CD4-positive, alpha-beta T cell (primary cell): ENCODE measurements at regions of chr2 and their contacts with region 1.

Region 1: GRCh38 chr2:105576440-105577252 is 168.1 kb upstream of the NCK2 start:
- DNase-seq: peak in 4 of 14 experiments; percentile 13 to 64 (median 62)
- ATAC-seq: peak; percentile 86
- H3K4me3 ChIP-seq: no peak overlapping the region
- H3K4me3 Mint-ChIP-seq: no peak overlapping the region
- H3K27ac ChIP-seq: no peak overlapping the region
- H3K27ac Mint-ChIP-seq: peak overlapping the region; percentile 83
- H3K4me1 ChIP-seq: peaks cover 17% of the 10 kb centered on the region
- H3K4me1 Mint-ChIP-seq: peaks cover 28% of the 10 kb centered on the region
- H3K27me3 ChIP-seq: no peaks in the 10 kb centered on the region
- H3K27me3 Mint-ChIP-seq: peaks cover 4% of the 10 kb centered on the region
- CTCF ChIP-seq: peak; percentile 78

Region 2: GRCh38 chr2:105344704-105345345 is 231.8 kb before region 1 on chr2:
- CTCF ChIA-PET with region 1: no interaction called
- POLR2A ChIA-PET with region 1: no interaction called
- intact Hi-C with region 1: no loop called
- DNase-seq: peak in 3 of 14 experiments; percentile 43 to 61 (median 53)
- ATAC-seq: peak; percentile 44
- H3K4me3 ChIP-seq: no peak overlapping the region
- H3K4me3 Mint-ChIP-seq: no peak overlapping the region
- H3K27ac ChIP-seq: no peak overlapping the region
- H3K27ac Mint-ChIP-seq: no peak overlapping the region
- H3K4me1 ChIP-seq: no peaks in the 10 kb centered on the region
- H3K4me1 Mint-ChIP-seq: peaks cover 20% of the 10 kb centered on the region
- H3K27me3 ChIP-seq: no peaks in the 10 kb centered on the region
- H3K27me3 Mint-ChIP-seq: no peaks in the 10 kb centered on the region
- CTCF ChIP-seq: peak; percentile 42

Region 3: DNA sequence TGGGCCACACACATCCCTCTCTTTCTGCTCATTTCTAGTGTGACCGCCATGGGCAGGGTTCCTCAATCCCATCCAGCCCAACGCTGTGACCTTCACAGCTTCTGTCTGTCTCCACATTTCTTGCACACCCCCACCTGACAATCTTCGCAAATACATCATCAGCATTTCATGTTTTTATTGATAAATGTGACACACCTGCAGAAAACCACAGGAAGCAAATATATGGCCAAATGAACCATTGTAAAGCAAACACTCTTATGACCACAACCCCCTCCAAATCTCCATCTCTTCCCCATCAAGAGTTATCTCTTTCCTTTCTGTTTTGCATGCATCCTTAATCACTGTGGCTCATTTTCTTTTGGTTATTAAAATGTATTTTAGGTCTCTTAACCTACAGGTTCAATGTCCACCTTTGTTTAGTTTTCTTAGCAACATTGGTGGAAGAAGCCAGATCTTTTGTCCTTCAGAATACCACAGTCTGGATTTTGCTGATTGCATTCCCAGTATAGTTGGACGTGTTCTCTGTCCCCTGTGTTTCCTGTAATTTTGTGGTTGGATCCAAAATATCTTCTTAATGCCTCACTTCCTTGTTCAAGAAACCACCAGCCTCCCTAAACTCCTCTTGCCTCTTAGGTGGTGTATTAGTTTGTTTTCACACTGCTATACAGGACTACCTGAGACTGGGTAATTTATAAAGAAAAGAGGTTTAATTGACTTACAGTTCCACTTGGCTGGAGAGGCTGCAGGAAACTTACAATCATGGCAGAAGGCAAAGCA is 158.3 kb after region 1 on chr2:
- CTCF ChIA-PET with region 1: no interaction called
- POLR2A ChIA-PET with region 1: interaction called, 3 read pairs
- intact Hi-C with region 1: loop called in 1 of 2 experiments (anchors 5 kb)
- DNase-seq: no peak
- ATAC-seq: no peak
- H3K4me3 ChIP-seq: no peak overlapping the region
- H3K4me3 Mint-ChIP-seq: no peak overlapping the region
- H3K27ac ChIP-seq: no peak overlapping the region
- H3K27ac Mint-ChIP-seq: no peak overlapping the region
- H3K4me1 ChIP-seq: peaks cover 47% of the 10 kb centered on the region
- H3K4me1 Mint-ChIP-seq: peaks cover 54% of the 10 kb centered on the region
- H3K27me3 ChIP-seq: no peaks in the 10 kb centered on the region
- H3K27me3 Mint-ChIP-seq: no peaks in the 10 kb centered on the region
- CTCF ChIP-seq: no peak

Region 4: DNA sequence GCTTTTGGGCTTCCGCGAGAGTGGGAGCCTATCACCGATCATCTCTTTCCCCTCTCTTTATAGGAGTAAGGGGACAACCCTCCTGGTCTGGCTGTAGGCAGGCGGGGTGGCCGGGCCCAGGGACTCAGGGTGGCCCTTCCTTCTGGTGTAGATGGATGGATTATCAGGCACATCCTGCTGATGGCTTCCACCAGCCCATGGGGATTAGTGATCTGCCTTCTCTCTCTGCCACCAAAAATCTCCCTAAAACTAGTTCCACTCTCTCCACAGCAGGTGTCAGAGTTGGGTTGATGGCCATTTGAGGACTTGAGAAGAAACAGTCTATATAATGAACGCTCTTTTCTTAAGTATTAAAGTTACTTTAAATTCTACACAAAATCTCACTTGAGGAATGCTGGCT is 205.5 kb after region 1 on chr2:
- CTCF ChIA-PET with region 1: no interaction called
- POLR2A ChIA-PET with region 1: interaction called, 3 read pairs
- intact Hi-C with region 1: loop called in 1 of 2 experiments (anchors 5 kb)
- DNase-seq: peak in 3 of 14 experiments; percentile 42 to 73 (median 69)
- ATAC-seq: peak; percentile 56
- H3K4me3 ChIP-seq: no peak overlapping the region
- H3K4me3 Mint-ChIP-seq: peak overlapping the region; percentile 81
- H3K27ac ChIP-seq: peak overlapping the region in 1 of 2 donors; percentile 47
- H3K27ac Mint-ChIP-seq: peak overlapping the region; percentile 98
- H3K4me1 ChIP-seq: peaks cover 96% of the 10 kb centered on the region
- H3K4me1 Mint-ChIP-seq: peaks cover 97% of the 10 kb centered on the region
- H3K27me3 ChIP-seq: no peaks in the 10 kb centered on the region
- H3K27me3 Mint-ChIP-seq: no peaks in the 10 kb centered on the region
- CTCF ChIP-seq: peak; percentile 52

Region 5: DNA sequence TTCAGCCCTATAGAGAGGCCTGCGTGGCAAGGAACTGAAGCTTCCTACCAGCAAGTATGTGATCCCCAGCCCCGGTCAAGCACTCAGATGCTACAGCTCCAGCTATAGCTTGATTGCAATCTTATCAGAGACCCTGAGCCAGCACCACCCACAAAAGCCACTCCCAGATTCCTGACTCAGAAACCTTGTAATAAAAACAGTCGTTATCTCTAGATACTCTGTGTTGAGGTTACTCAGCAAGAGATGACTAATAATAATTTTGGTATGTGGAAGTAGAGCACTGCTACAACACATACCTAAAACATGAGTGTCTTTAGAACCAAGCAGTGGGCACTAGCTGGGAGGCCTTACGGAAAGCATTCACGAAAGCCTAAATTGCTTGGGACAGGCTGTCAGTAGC is 400.6 kb after region 1 on chr2:
- CTCF ChIA-PET with region 1: no interaction called
- POLR2A ChIA-PET with region 1: no interaction called
- intact Hi-C with region 1: loop called in 1 of 2 experiments (anchors 5 kb)
- DNase-seq: peak in 1 of 14 experiments; percentile 28
- ATAC-seq: no peak
- H3K4me3 ChIP-seq: no peak overlapping the region
- H3K4me3 Mint-ChIP-seq: no peak overlapping the region
- H3K27ac ChIP-seq: no peak overlapping the region
- H3K27ac Mint-ChIP-seq: peak overlapping the region; percentile 68
- H3K4me1 ChIP-seq: peaks cover 32% of the 10 kb centered on the region
- H3K4me1 Mint-ChIP-seq: peaks cover 39% of the 10 kb centered on the region
- H3K27me3 ChIP-seq: no peaks in the 10 kb centered on the region
- H3K27me3 Mint-ChIP-seq: no peaks in the 10 kb centered on the region
- CTCF ChIP-seq: no peak

Region 6: GRCh38 chr2:106104332-106105062 is 527.9 kb after region 1 on chr2:
- CTCF ChIA-PET with region 1: no interaction called
- POLR2A ChIA-PET with region 1: no interaction called
- intact Hi-C with region 1: loop called in 1 of 2 experiments (anchors 2 kb)
- DNase-seq: peak; percentile 40 to 85 (median 58)
- ATAC-seq: peak; percentile 80
- H3K4me3 ChIP-seq: no peak overlapping the region
- H3K4me3 Mint-ChIP-seq: no peak overlapping the region
- H3K27ac ChIP-seq: no peak overlapping the region
- H3K27ac Mint-ChIP-seq: peak overlapping the region; percentile 55
- H3K4me1 ChIP-seq: no peaks in the 10 kb centered on the region
- H3K4me1 Mint-ChIP-seq: peaks cover 9% of the 10 kb centered on the region
- H3K27me3 ChIP-seq: no peaks in the 10 kb centered on the region
- H3K27me3 Mint-ChIP-seq: no peaks in the 10 kb centered on the region
- CTCF ChIP-seq: peak; percentile 97